Endothelial cell of umbilical vein (primary cell): ENCODE measurements at regions of chr10 and their contacts with region 1.

Region 1: GRCh38 chr10:114388275-114388674 is 16.0 kb downstream of the AFAP1L2 start:
- DNase-seq: no peak
- H3K4me3 ChIP-seq: no peak overlapping the region
- H3K27ac ChIP-seq: no peak overlapping the region
- H3K4me1 ChIP-seq: peaks cover 31% of the 10 kb centered on the region
- H3K27me3 ChIP-seq: peaks cover 2% of the 10 kb centered on the region in 2 experiments
- CTCF ChIP-seq: no peak
- POLR2A ChIP-seq: no peak

Region 2: GRCh38 chr10:114095559-114096337 is 292.5 kb before region 1 on chr10:
- CTCF ChIA-PET with region 1: no interaction called
- POLR2A ChIA-PET with region 1: no interaction called
- dilution Hi-C with region 1: no loop called
- intact Hi-C with region 1: no loop called
- DNase-seq: no peak
- H3K4me3 ChIP-seq: no peak overlapping the region
- H3K27ac ChIP-seq: no peak overlapping the region
- H3K4me1 ChIP-seq: peaks cover 6% of the 10 kb centered on the region
- H3K27me3 ChIP-seq: peaks cover 0 to 4% of the 10 kb centered on the region in 2 experiments
- CTCF ChIP-seq: no peak
- POLR2A ChIP-seq: no peak

Region 3: DNA sequence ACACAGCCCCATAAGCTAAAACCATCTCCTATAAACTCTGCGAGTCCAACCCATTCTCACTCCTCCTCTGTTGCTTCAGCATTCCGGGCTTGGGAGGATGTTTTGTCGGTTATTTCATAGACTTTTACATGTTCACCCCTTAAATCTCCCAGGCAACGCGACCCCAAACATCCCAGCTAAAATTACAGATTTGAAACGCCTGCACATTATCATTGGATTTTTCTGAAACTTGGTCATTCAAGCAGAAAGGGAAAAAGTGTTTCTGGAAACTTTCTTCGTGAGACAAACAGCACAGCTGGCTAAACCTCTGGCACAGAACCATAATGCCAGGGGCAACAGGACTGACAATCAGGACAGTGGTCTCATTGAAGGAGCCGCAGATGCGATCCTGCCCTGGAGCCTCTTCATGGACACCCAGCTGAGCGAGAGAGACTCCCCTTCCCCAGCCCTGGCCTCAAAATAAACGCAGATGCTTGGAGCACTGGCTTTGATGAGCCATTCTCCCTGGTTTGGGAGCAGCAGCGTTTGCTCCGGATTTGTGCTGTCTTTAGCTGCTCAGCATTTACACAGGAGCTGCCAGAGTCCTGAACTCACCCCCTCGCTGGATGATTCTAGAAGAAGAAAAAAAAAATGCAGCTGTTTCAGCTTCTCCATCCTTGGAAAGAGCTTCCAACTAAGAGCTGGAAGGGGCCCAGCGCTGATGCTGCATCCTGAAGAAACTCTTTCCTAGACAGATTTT is 14.1 kb before region 1 on chr10:
- CTCF ChIA-PET with region 1: interaction called, 7 read pairs
- POLR2A ChIA-PET with region 1: interaction called, 3 read pairs
- dilution Hi-C with region 1: no loop called
- intact Hi-C with region 1: loop called (anchors 1 kb)
- DNase-seq: peak; percentile 36
- H3K4me3 ChIP-seq: no peak overlapping the region
- H3K27ac ChIP-seq: no peak overlapping the region
- H3K4me1 ChIP-seq: peaks cover 21% of the 10 kb centered on the region
- H3K27me3 ChIP-seq: peaks cover 22 to 40% of the 10 kb centered on the region in 2 experiments
- CTCF ChIP-seq: no peak
- POLR2A ChIP-seq: no peak

Region 4: DNA sequence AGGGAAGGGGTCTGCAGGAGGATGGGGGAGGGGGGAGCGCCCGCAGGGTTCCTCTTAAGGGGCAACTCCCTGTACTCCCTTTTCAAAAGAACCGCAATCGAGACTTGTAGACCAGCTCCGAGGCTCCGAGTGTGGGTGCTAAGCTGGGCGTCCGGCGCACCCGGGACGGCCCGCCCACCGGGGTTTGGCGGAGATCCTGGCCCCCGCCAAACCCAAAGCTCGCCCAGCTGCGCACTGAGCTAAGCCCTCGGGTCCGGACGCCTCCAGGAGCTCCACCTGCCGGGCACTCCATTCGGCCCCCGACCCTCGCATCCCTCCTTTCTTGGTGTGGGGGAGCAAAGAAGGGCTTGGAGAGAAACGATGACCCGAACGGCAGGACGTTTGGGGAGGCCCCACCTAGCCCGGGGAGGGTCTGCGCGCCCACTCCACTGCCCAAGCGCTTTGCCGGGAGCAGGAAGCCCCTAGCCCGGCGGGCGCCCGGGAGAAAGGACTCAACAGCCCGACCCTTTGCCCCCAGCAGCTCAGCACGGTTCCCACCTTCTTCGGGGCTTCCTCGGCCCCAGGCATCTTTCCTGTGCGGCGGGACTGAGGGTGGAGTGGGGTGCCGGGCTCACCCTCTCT is 15.4 kb after region 1 on chr10:
- CTCF ChIA-PET with region 1: interaction called, 4 read pairs
- POLR2A ChIA-PET with region 1: no interaction called
- dilution Hi-C with region 1: no loop called
- intact Hi-C with region 1: loop called (anchors 1 kb)
- DNase-seq: no peak
- H3K4me3 ChIP-seq: peak overlapping the region in 1 of 3 experiments; percentile 34
- H3K27ac ChIP-seq: no peak overlapping the region
- H3K4me1 ChIP-seq: peaks cover 5% of the 10 kb centered on the region
- H3K27me3 ChIP-seq: peaks cover 64 to 70% of the 10 kb centered on the region in 2 experiments
- CTCF ChIP-seq: peak in 1 of 2 donors; percentile 27
- POLR2A ChIP-seq: no peak

Region 5: DNA sequence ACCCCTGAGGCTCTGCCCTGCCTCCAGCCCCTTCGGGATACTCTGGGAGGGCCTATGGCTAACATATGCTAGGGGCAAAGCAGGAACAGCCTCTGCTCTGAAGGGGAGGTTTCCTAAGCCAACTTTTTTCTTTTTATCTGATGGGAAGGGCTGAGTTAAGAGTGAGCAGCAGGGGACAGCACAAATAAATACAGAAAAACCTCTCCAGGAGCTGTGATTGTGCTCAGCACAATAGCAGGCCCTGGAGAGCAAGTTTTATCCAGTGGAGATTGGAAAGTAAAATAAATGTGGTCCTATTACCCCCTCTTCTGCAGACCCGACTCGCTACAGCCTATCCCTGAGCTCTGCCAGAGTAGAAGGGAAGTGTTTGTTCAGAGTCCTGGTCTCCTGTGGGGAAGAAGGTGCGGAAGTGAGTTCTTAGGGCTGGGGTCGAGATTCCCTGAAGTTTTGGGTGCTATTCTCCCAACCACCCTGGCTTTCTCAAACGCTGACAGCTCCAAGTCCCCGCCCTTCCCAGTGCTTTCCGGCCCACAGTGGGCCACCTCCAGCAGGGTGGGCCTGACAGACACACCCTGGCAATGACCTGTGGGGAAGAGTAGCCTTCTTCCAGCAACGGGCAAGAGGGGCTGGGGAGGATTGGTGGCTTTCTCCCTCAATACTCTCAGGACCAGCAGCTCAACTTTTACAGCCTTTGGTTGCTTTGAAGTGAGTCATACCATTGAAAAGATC is 39.0 kb after region 1 on chr10:
- CTCF ChIA-PET with region 1: interaction called, 3 read pairs
- POLR2A ChIA-PET with region 1: no interaction called
- dilution Hi-C with region 1: no loop called
- intact Hi-C with region 1: loop called (anchors 1 kb)
- DNase-seq: peak; percentile 65
- H3K4me3 ChIP-seq: no peak overlapping the region
- H3K27ac ChIP-seq: no peak overlapping the region
- H3K4me1 ChIP-seq: peaks cover 13% of the 10 kb centered on the region
- H3K27me3 ChIP-seq: peaks cover 0 to 4% of the 10 kb centered on the region in 2 experiments
- CTCF ChIP-seq: no peak
- POLR2A ChIP-seq: no peak

Region 6: GRCh38 chr10:114767101-114767985 is 379.1 kb after region 1 on chr10:
- CTCF ChIA-PET with region 1: no interaction called
- POLR2A ChIA-PET with region 1: no interaction called
- dilution Hi-C with region 1: no loop called
- intact Hi-C with region 1: no loop called
- DNase-seq: peak; percentile 65
- H3K4me3 ChIP-seq: peak overlapping the region; percentile 59 to 68 (median 62)
- H3K27ac ChIP-seq: no peak overlapping the region
- H3K4me1 ChIP-seq: peaks cover 15% of the 10 kb centered on the region
- H3K27me3 ChIP-seq: peaks cover 0 to 4% of the 10 kb centered on the region in 2 experiments
- CTCF ChIP-seq: no peak
- POLR2A ChIP-seq: no peak